Activated CD8-positive, alpha-beta memory T cell treated with anti-CD3 and anti-CD28 coated beads, Interleukin-2, amount 10 ng/mL, durations not matched to agents 7 days and 5 days (primary cell): ENCODE measurements at regions of chr1 and their contacts with region 1.

Region 1: DNA sequence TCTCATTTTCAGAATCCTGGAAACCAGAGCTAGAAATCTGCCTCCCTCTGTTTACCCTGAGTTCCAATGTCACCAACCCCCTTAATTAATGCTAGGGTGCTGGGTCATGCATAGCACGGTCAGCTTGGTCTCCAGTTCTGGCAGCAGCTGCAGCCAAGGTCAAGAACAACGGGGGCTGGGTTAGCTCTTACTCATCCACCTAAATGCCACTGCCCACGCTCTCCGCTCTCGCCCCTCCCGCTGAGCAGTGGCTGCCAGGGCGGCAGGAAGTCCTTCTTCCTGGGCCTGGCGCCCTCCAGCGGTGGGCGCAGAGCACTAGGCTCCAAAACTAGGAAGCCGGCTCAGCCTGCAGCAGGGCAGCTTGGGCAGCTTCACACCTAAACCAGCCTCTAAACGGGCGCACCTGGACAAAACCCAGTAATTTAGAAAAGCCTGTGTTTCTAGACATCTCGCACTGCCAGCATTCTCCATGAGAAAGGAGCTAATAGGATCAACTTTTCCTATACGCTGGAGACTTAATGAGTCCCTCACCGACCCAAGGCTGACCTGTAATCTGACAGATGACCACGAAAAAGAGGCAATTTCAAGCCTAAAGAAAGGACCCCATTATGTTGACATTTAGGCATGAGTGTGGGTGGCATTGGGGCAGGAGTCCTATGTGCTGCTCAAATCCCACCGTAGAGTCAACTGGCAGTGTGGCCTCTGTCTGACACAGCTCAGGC is 78.3 kb upstream of the LRRN2 start:
- DNase-seq: peak; percentile 83
- ATAC-seq: peak; percentile 98
- H3K4me3 Mint-ChIP-seq: no peak overlapping the region
- H3K27ac Mint-ChIP-seq: no peak overlapping the region
- H3K4me1 Mint-ChIP-seq: peaks cover 5% of the 10 kb centered on the region
- H3K27me3 Mint-ChIP-seq: peaks cover 48% of the 10 kb centered on the region

Region 2: DNA sequence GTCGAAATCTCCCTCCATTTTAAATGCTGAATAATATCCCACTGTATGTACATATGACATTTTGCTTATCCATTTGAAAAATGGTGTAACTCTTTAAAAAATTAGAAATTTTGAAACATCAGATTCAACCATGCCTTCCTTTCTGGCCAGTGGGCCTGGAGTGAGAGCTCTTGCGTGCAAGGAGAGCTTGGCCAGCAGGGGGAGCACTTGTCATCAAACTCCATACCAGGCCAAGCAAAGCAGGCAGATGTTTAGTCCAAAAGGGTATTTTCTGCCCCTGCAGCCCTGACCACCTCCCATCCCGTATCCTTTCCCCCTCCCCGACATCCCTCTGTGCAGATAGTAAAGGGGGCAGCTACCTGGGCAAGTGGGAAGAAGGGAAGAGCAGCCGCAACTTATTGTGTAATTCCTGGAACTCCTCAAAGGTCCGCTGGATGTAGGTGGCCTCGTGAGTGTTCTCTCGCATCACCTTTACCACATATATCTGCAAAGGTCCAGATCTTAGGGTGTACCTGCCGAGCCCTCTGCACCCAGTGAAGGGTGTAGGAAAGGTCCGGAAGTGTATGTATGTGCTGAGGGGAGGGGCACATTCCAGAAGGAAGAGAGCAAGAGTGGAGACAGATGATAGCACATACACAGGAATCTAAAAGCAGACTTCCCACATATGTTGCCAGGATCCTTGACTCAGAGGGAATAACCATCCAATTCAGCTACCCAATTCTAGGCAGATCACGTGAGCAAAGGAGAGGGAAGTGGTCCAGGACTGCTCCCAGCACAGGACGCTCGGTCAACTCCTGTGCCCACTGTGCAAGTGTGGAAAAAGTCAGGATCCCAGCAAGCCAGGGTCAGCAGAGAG is 332.3 kb before region 1 on chr1:
- CTCF ChIA-PET with region 1: interaction called, 14 read pairs
- DNase-seq: peak; percentile 85
- ATAC-seq: peak; percentile 88
- H3K4me3 Mint-ChIP-seq: no peak overlapping the region
- H3K27ac Mint-ChIP-seq: peak overlapping the region; percentile 20
- H3K4me1 Mint-ChIP-seq: no peaks in the 10 kb centered on the region
- H3K27me3 Mint-ChIP-seq: no peaks in the 10 kb centered on the region

Region 3: GRCh38 chr1:204578867-204579664 is 184.8 kb before region 1 on chr1:
- CTCF ChIA-PET with region 1: interaction called, 17 read pairs
- DNase-seq: peak; percentile 68
- ATAC-seq: peak; percentile 79
- H3K4me3 Mint-ChIP-seq: peak overlapping the region; percentile 69
- H3K27ac Mint-ChIP-seq: peak overlapping the region; percentile 86
- H3K4me1 Mint-ChIP-seq: peaks cover 23% of the 10 kb centered on the region
- H3K27me3 Mint-ChIP-seq: no peaks in the 10 kb centered on the region

Region 4: DNA sequence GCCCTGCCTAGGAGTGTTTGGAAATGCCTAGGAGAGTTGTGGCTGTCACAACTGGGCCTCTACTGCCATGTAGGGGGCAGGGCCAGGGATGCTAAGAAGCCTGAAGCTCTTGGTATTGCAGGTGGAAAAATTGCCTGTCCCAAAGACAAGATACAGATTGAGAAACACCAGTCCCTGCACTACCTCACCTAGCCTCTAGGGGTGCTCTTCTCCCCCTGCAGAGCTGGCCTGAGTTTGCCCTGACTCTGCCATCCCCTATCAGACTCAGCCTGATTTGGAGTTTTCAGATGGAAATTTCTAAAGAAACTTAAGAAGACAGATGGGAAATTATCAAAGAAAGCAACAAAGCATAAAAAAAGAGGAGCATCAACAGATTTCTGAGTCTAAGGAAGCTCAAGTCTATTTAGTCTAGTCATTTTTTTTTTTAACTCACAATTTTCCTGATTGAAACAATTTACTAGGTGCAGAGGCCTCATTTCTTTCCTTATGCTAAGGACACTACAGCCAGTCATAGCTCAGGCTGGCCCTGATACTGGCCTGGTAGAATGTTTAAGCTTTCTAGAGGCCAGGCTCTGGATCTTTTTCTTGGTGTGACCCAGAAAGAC is 16.9 kb before region 1 on chr1:
- CTCF ChIA-PET with region 1: interaction called, 25 read pairs
- DNase-seq: peak; percentile 56
- ATAC-seq: peak; percentile 78
- H3K4me3 Mint-ChIP-seq: no peak overlapping the region
- H3K27ac Mint-ChIP-seq: no peak overlapping the region
- H3K4me1 Mint-ChIP-seq: no peaks in the 10 kb centered on the region
- H3K27me3 Mint-ChIP-seq: peaks cover 32% of the 10 kb centered on the region

Region 5: DNA sequence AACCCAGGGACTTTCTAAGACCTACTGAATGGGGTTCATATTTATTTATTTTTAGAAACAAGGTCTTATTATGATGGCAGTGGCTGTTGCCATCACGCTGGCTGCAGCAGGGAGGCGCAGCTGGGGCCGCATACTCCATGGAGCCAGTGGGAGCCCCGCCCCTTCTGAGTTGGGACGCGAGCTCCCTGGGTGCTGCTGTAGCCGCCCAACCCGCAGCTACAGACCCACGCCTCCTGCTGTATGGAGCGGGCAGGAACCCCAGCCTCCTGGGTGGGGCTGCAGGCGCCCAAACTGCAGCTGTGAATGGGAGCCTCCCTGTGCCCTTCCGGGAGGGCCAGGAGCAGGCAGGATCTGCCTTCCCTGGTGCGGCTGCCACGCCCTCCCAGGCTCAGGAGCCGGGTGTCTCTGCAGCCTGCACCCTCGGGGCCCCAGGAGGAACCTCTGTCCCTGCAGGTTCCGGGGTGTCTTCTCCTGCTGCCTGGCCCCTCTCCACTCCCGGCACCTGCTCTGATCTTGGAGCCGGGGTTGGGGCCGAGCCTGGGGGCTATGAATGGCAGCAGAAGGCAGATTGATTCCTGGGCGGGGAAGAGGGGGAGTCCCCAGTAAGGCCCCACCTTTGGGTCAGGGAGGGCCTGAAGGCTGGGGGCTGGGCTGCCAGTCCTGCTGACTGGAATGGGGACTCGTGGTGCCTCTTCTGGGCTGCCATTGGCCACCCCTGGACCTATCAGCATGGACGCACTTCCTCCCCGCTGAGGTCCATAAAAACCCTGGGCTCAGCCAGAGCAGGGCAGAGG is 11.8 kb before region 1 on chr1:
- CTCF ChIA-PET with region 1: interaction called, 25 read pairs
- DNase-seq: peak; percentile 31
- ATAC-seq: no peak
- H3K4me3 Mint-ChIP-seq: no peak overlapping the region
- H3K27ac Mint-ChIP-seq: no peak overlapping the region
- H3K4me1 Mint-ChIP-seq: no peaks in the 10 kb centered on the region
- H3K27me3 Mint-ChIP-seq: peaks cover 16% of the 10 kb centered on the region

Region 6: GRCh38 chr1:204791453-204792353 is 27.8 kb after region 1 on chr1:
- CTCF ChIA-PET with region 1: interaction called, 11 read pairs
- DNase-seq: peak; percentile 85
- ATAC-seq: peak; percentile 67
- H3K4me3 Mint-ChIP-seq: no peak overlapping the region
- H3K27ac Mint-ChIP-seq: no peak overlapping the region
- H3K4me1 Mint-ChIP-seq: no peaks in the 10 kb centered on the region
- H3K27me3 Mint-ChIP-seq: peaks cover 42% of the 10 kb centered on the region